PC-3 (cell line): ENCODE measurements at regions of chr12 and their contacts with region 1.

Region 1: DNA sequence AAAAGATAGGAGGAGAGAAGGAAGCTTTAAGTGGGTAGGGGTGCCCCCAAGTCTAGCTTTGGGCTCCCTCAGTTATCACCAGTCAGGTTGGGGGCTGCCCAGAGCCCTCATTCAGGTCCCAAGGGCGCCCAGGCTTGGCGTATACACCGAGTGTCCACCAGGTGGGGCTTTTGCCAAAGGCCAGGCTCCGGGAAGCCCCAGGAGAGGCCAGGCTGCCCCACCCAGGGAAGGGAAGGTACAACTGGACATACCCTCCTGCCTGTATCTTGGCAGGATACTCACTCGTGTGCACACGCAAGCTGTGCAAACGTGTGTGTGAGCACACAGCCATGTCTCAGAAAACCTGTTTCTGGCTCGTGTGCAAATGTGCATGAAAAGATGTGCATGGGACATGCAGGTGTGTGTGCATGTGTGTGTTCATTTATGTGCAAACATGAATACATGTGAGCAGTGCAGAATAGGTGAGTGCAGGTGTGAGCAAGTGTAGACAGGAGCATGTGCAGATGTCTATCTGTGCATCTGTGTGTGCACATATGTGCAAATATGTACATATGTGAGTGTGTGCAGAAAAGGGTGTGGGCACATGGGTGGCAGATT is 103.9 kb upstream of the MYL2 start:
- DNase-seq: peak; percentile 84
- ATAC-seq: peak; percentile 100
- H3K4me3 ChIP-seq: no peak overlapping the region
- H3K27ac ChIP-seq: no peak overlapping the region
- H3K4me1 ChIP-seq: no peaks in the 10 kb centered on the region
- H3K27me3 ChIP-seq: peaks cover 39% of the 10 kb centered on the region
- CTCF ChIP-seq: peak; percentile 98

Region 2: GRCh38 chr12:110893956-110894355 is 130.3 kb before region 1 on chr12:
- CTCF ChIA-PET with region 1: interaction called, 3 read pairs
- POLR2A ChIA-PET with region 1: no interaction called
- intact Hi-C with region 1: loop called (anchors 5 kb)
- DNase-seq: no peak
- ATAC-seq: no peak
- H3K4me3 ChIP-seq: peak overlapping the region; percentile 53; the same call in 1 of the 2 replicates
- H3K27ac ChIP-seq: no peak overlapping the region
- H3K4me1 ChIP-seq: peaks cover 25% of the 10 kb centered on the region; the same call in 1 of the 2 replicates
- H3K27me3 ChIP-seq: no peaks in the 10 kb centered on the region
- CTCF ChIP-seq: no peak

Region 3: DNA sequence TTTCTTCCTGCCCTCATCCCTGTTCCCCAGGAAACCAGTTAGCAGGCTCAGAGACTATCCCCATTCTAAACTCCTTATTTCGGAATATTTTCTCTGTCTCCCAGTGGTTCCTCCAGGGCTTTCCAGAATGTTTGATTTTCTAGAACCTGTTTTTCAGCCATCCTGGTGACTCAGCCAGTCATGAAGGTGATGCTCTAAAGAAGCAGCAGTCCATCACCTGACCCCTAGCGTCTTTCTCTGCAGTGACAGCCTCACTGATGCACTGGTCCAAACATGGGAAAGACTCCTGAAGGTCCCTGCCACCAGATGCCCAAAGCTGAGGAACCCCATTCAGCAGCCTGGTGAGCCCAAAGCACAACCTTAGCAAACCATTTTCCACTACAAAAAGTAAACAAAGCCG is 132.0 kb after region 1 on chr12:
- CTCF ChIA-PET with region 1: no interaction called
- POLR2A ChIA-PET with region 1: no interaction called
- intact Hi-C with region 1: loop called (anchors 1 kb)
- DNase-seq: peak; percentile 94
- ATAC-seq: peak; percentile 94
- H3K4me3 ChIP-seq: no peak overlapping the region
- H3K27ac ChIP-seq: no peak overlapping the region
- H3K4me1 ChIP-seq: peaks cover 4% of the 10 kb centered on the region; the same call in 1 of the 2 replicates
- H3K27me3 ChIP-seq: peaks cover 63% of the 10 kb centered on the region
- CTCF ChIP-seq: peak; percentile 75

Region 4: DNA sequence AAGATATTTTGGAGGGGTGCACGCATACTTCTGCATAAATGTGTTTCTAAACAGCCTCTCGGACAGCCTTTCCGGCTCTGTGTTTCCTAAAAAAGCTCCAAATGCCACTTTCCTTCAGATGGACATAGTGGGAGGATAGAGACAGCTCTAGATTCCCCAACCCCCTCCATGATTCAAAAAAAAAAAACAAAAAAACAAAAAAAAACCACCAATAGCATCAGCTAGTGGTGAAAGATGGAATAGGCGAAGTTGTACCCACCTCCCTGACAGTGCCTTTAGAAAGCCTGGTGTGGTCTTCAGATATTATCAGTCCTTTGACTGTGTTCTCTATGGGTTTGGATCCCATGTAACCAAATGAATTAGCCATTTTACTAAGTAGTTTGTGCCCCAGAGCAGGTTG is 250.5 kb after region 1 on chr12:
- CTCF ChIA-PET with region 1: interaction called, 6 read pairs
- POLR2A ChIA-PET with region 1: no interaction called
- intact Hi-C with region 1: loop called (anchors 1 kb)
- DNase-seq: peak; percentile 40
- ATAC-seq: peak; percentile 39
- H3K4me3 ChIP-seq: no peak overlapping the region
- H3K27ac ChIP-seq: no peak overlapping the region
- H3K4me1 ChIP-seq: no peaks in the 10 kb centered on the region; the same call in 1 of the 2 replicates
- H3K27me3 ChIP-seq: 0 out of 2 replicates have a peak, but pooled peaks cover 5% of the 10 kb centered on the region
- CTCF ChIP-seq: peak; percentile 84

Region 5: GRCh38 chr12:111313833-111314259 is 289.5 kb after region 1 on chr12:
- CTCF ChIA-PET with region 1: no interaction called
- POLR2A ChIA-PET with region 1: no interaction called
- intact Hi-C with region 1: loop called (anchors 2 kb)
- DNase-seq: peak; percentile 87
- ATAC-seq: peak; percentile 70
- H3K4me3 ChIP-seq: 0 out of 2 replicates have a peak overlapping the region, but pooled peaks have one; percentile 18
- H3K27ac ChIP-seq: no peak overlapping the region
- H3K4me1 ChIP-seq: peaks cover 28% of the 10 kb centered on the region
- H3K27me3 ChIP-seq: no peaks in the 10 kb centered on the region
- CTCF ChIP-seq: peak; percentile 98